ENCODE measurements at regions of chr11 and their contacts with region 1.

Region 1: GRCh38 chr11:101860696-101861427 is 53.9 kb upstream of the CEP126 start:
- DNase-seq: peak; percentile 24 to 54 (median 33)
- H3K4me3 ChIP-seq: no peak overlapping the region
- H3K27ac ChIP-seq: no peak overlapping the region
- H3K4me1 ChIP-seq: peaks cover 4% of the 10 kb centered on the region
- H3K27me3 ChIP-seq: no peaks in the 10 kb centered on the region
- CTCF ChIP-seq: peak; percentile 53 to 71 (median 60)
- EP300 ChIP-seq: no peak
- POLR2A ChIP-seq: no peak

Region 2: GRCh38 chr11:101894505-101894904 is 33.6 kb after region 1 on chr11:
- intact Hi-C with region 1: no loop called
- DNase-seq: no peak
- H3K4me3 ChIP-seq: no peak overlapping the region
- H3K27ac ChIP-seq: no peak overlapping the region
- H3K4me1 ChIP-seq: no peaks in the 10 kb centered on the region
- H3K27me3 ChIP-seq: no peaks in the 10 kb centered on the region
- CTCF ChIP-seq: no peak
- EP300 ChIP-seq: no peak
- POLR2A ChIP-seq: no peak

Region 3: GRCh38 chr11:101974255-101974654 is 113.4 kb after region 1 on chr11:
- intact Hi-C with region 1: loop called in 1 of 4 experiments (anchors 10 kb)
- DNase-seq: no peak
- H3K4me3 ChIP-seq: no peak overlapping the region
- H3K27ac ChIP-seq: no peak overlapping the region
- H3K4me1 ChIP-seq: no peaks in the 10 kb centered on the region
- H3K27me3 ChIP-seq: no peaks in the 10 kb centered on the region
- CTCF ChIP-seq: no peak
- EP300 ChIP-seq: no peak
- POLR2A ChIP-seq: no peak

Region 4: GRCh38 chr11:102007567-102008437 is 146.9 kb after region 1 on chr11:
- intact Hi-C with region 1: loop called in 2 of 4 experiments (anchors 5 to 10 kb)
- DNase-seq: no peak
- H3K4me3 ChIP-seq: no peak overlapping the region
- H3K27ac ChIP-seq: no peak overlapping the region
- H3K4me1 ChIP-seq: no peaks in the 10 kb centered on the region
- H3K27me3 ChIP-seq: no peaks in the 10 kb centered on the region
- CTCF ChIP-seq: peak; percentile 33 to 48 (median 38)
- EP300 ChIP-seq: no peak
- POLR2A ChIP-seq: no peak

Measured in ovary (tissue), 10 donors.